ENCODE measurements at regions of chr7 and their contacts with region 1.

Region 1: DNA sequence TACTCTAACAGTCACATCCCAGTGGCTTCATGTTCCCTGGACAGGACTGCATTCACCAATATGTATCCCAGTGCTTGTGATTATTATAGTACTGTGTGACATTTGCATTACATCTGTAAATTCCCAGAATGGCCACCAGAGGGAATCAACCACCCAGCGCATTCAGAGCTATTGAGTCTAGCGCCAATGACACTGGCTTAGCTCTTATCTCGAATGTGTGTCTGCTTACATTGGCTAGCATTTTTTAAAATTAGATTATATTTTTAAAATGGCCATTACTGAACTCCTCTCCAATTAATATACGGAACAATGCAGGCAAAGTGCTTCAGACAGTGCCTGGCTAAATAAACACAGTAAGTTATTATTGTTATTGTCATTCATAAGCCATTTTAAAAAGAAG is 36.3 kb downstream of the TRIL start:
- DNase-seq: no peak
- H3K4me3 ChIP-seq: no peak overlapping the region
- CTCF ChIP-seq: peak; percentile 78

Region 2: GRCh38 chr7:28389504-28390395 is 532.1 kb before region 1 on chr7:
- CTCF ChIA-PET with region 1: interaction called, 10 read pairs
- POLR2A ChIA-PET with region 1: no interaction called
- DNase-seq: no peak
- H3K4me3 ChIP-seq: peak overlapping the region; percentile 46
- CTCF ChIP-seq: peak; percentile 37

Region 3: DNA sequence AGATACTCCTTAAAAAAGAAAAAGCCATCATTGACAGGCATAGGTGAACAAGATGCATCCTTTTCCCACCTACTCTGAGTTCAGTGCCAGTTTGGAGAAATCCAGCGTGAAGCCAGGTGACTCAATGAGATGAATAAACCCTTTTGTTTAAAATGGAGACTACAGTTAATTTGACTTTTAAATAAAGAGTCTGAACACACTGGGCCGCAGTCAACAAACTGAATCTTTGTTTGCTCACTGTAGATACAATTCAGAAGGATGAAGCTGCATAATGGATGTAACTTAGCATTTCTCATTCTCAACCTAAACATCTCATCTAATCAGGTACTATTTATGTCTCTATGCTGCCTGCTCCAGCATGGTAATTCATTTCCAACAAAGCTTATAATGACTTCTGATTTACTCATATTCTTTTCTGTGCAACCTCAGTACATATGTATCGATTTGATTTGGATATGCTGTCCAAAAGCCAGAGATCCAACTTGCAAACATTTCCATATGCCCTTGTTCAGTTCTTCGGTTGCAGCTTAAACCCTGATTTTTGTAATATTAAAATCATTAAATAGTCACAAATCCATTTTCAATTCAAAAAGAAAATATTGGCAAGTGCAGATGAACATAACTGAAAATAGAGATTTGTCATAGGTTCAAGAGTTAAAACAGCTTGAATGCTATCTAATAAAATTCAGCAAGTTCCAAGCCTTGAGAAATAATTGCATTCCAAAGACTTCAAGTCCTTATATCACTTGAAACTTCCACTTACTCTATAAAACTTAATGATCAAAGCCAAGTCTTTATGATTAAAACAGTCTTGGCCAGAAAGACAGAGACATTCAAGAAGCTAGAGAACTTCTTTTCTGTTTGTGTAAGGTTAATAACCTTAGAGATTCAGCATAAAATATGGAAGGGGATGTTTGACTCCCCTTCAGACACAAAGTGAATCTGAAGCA is 156.8 kb after region 1 on chr7:
- CTCF ChIA-PET with region 1: interaction called, 25 read pairs
- POLR2A ChIA-PET with region 1: no interaction called
- DNase-seq: no peak
- H3K4me3 ChIP-seq: no peak overlapping the region
- CTCF ChIP-seq: no peak

Region 4: DNA sequence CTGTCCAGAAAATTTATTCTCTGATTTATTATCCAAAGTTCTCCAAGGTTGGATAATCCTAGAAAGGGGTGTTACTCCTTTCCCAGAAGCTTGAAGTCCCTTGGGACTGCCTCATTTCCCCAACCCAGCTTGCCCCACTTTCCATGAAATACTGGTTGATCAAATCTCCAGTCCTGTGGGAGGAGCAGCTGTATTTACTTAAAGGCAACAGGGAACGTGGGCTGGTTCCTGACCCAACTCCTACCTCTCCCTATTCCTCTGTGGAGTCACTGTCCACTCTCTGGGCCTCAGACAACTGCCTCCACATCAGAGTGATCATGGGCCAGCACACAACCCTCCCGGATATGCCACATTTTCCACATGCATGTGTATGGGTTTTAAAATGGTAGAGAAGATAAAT is 475.6 kb after region 1 on chr7:
- CTCF ChIA-PET with region 1: interaction called, 10 read pairs
- POLR2A ChIA-PET with region 1: no interaction called
- DNase-seq: no peak
- H3K4me3 ChIP-seq: no peak overlapping the region
- CTCF ChIP-seq: no peak